Calu3 (cell line): ENCODE measurements at regions of chr15 and their contacts with region 1.

Region 1: GRCh38 chr15:80695104-80695910 is at the start of gene ABHD17C:
- DNase-seq: peak; percentile 84
- H3K4me3 Mint-ChIP-seq: peak within 1 kb of the TSS; percentile 91
- H3K27ac Mint-ChIP-seq: peak within 1 kb of the TSS; percentile 92
- H3K4me1 Mint-ChIP-seq: peaks cover 40% of the 10 kb centered on the region
- H3K27me3 Mint-ChIP-seq: no peaks in the 10 kb centered on the region
- CTCF ChIP-seq: no peak
- total RNA-seq, gene ABHD17C: 69.4 and 69.7 TPM in 2 replicates

Region 2: DNA sequence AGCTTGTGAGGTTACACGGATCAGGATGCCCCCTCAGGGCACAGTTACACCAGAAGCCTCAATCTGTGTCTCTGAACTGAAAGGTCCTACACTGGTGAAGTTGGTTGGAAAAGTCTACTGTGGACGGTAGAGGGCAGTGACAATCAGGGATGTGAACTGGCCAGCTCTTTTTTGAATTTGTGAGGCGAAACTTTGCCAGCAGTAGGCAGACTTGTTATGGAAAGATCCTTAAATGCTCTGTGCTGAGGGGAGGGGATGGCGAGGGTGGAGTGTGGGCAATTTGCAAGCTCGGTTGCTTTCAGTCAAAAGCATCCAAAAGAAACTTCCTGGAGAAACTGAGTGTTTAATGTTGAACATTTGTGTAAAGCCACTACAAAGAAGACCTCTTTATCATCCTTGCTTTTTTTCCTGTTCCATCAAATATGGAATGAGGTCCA is 127.6 kb before region 1 on chr15:
- CTCF ChIA-PET with region 1: interaction called, 17 read pairs
- intact Hi-C with region 1: loop called (anchors 5 kb)
- DNase-seq: peak; percentile 76
- H3K4me3 Mint-ChIP-seq: no peak overlapping the region
- H3K27ac Mint-ChIP-seq: no peak overlapping the region
- H3K4me1 Mint-ChIP-seq: peaks cover 7% of the 10 kb centered on the region
- H3K27me3 Mint-ChIP-seq: peaks cover 16% of the 10 kb centered on the region
- CTCF ChIP-seq: peak; percentile 75

Region 3: GRCh38 chr15:80636675-80637074 is 58.6 kb before region 1 on chr15:
- CTCF ChIA-PET with region 1: no interaction called
- intact Hi-C with region 1: no loop called
- DNase-seq: no peak
- H3K4me3 Mint-ChIP-seq: no peak overlapping the region
- H3K27ac Mint-ChIP-seq: no peak overlapping the region
- H3K4me1 Mint-ChIP-seq: no peaks in the 10 kb centered on the region
- H3K27me3 Mint-ChIP-seq: peaks cover 24% of the 10 kb centered on the region
- CTCF ChIP-seq: no peak

Region 4: GRCh38 chr15:80660122-80660521 is 35.2 kb before region 1 on chr15:
- CTCF ChIA-PET with region 1: interaction called, 18 read pairs
- intact Hi-C with region 1: loop called (anchors 1 kb)
- DNase-seq: peak; percentile 66
- H3K4me3 Mint-ChIP-seq: no peak overlapping the region
- H3K27ac Mint-ChIP-seq: no peak overlapping the region
- H3K4me1 Mint-ChIP-seq: peaks cover 48% of the 10 kb centered on the region
- H3K27me3 Mint-ChIP-seq: no peaks in the 10 kb centered on the region
- CTCF ChIP-seq: peak; percentile 35

Region 5: DNA sequence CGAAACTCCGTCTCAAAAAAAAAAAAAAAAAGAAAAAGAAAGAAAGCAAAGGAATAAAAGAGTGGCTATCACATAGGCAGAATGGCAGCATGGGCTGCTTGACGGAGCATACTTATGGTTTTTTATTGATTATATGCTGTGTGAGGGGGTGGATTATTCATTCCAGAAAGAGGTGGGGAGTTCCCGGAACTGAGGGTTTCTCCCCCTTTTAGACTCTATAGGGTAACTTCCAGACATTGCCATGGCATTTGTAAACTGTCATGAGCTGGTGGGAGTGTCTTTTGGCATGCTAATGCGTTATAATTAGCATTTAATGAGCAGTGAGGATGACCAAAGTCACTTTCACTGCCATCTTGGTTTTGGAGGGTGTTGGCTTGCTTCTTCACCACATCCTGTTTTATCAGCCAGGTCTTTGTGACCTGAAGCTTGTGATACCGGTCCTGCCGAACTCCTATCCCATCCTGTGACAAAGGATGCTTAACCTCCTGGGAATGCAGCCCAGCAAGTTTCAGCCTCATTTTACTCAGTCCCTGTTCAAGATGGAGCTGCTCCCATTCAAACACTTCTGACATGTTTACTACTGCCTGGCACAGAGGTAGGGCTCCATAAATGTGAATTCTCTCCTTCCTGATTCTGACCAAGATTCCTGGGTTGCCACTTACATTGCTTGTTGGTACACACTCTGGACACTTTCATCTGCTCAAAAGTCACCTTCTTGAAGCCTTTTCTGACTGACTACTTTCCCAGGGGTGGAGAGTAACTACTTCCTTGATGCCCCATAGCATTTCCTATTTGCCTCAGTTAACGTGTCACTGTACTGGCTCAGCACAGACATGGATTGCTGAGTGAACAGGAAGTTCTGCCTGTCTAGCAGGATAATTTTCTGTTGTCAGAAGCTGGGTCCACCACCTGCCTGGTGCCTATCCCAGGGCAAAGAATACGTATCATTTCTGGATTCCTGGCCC is 15.9 kb before region 1 on chr15:
- CTCF ChIA-PET with region 1: interaction called, 19 read pairs
- intact Hi-C with region 1: no loop called
- DNase-seq: peak; percentile 84
- H3K4me3 Mint-ChIP-seq: peak overlapping the region; percentile 27
- H3K27ac Mint-ChIP-seq: peak overlapping the region; percentile 95
- H3K4me1 Mint-ChIP-seq: peaks cover 66% of the 10 kb centered on the region
- H3K27me3 Mint-ChIP-seq: no peaks in the 10 kb centered on the region
- CTCF ChIP-seq: no peak

Region 6: DNA sequence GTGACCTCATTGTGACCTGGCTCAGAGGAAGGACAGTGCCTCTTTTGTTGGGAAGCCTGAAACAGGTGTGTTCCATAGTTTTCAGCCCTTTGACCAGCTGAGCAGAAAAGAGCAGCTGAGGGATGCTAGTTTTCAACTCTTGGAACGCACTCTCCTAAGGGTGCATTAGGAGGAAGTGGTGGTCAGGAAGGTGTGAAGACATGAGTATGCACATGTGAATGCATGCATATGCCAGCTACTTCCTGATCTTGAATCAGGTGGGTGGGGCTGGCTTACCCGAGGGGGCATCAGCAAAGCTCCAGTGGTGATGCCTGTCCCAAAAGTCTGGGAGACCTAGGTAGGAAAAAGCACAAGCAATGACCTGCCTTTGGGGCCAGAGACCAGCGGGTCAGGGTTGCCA is 60.6 kb after region 1 on chr15:
- CTCF ChIA-PET with region 1: no interaction called
- intact Hi-C with region 1: no loop called
- DNase-seq: no peak
- H3K4me3 Mint-ChIP-seq: no peak overlapping the region
- H3K27ac Mint-ChIP-seq: no peak overlapping the region
- H3K4me1 Mint-ChIP-seq: no peaks in the 10 kb centered on the region
- H3K27me3 Mint-ChIP-seq: no peaks in the 10 kb centered on the region
- CTCF ChIP-seq: no peak

Region 7: DNA sequence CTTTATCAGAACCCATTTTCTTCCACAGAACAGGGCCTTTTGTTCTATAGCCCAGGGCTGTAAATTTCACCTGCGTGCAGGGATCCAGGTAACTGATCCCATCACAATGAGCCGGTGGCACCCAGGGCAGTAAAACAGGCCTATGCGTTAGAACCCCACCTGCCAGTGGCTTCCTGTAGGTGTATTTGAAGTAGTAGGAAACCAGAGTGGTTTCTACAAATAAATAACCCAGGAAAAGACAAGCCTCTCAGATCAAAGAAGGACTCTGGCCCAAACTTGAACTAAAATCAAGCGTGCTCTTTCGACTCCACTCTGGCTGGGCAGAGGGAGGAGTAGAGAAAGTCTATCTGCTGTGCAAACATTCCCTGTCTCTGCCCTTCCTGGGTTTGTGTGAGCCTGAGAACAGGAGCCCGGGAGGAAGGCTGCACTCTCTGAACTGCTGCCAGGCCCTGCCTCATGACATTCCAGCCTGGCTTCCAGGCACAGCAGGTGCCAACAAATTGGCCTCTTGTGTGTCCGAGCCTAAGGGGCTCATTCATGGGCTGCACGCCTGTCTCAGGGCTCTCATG is 161.6 kb after region 1 on chr15:
- CTCF ChIA-PET with region 1: no interaction called
- intact Hi-C with region 1: loop called (anchors 10 kb)
- DNase-seq: peak; percentile 65
- H3K4me3 Mint-ChIP-seq: no peak overlapping the region
- H3K27ac Mint-ChIP-seq: peak overlapping the region; percentile 0
- H3K4me1 Mint-ChIP-seq: peaks cover 40% of the 10 kb centered on the region
- H3K27me3 Mint-ChIP-seq: peaks cover 18% of the 10 kb centered on the region
- CTCF ChIP-seq: no peak

Region 8: DNA sequence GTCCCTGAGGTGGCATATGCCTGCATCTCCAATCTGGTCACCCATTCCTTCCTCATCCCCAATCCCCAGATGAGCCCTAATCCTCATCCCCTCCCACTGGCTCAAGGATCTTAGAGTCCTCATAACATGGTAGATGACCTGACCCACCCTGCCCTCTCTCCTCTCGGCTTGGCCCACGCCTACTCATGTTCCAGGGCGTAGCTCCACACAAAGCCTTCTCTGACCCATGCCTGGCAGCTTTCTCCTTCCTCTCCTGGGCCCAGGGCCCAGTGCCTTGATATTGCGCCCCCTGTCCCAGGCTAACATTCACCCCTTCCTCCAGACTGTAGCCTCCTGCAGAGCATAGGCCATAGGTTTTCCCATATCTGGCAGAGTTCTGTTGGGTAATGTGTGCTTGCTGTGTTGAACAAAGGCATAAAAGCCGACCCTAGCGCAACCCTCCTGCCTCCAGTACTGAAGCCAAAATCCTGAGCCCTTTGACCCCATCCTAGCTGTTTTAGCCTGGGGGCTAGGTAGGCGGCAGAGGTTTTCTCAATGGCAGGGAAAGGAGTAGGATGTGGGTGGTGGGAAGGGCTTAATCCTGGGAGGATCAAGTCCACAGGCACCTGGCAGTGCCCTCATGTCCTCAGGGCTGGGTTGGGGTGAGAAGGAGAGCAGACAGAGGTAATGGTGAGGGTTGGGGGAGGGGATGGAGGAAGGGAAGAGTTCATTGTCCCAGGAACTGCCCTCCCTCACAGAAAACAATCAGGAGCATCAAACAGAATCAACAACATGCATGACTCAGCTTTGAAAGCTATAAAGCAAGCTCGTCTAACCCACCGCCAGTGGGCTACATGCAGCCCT is 258.9 kb after region 1 on chr15:
- CTCF ChIA-PET with region 1: no interaction called
- intact Hi-C with region 1: no loop called
- DNase-seq: no peak
- H3K4me3 Mint-ChIP-seq: no peak overlapping the region
- H3K27ac Mint-ChIP-seq: no peak overlapping the region
- H3K4me1 Mint-ChIP-seq: peaks cover 33% of the 10 kb centered on the region
- H3K27me3 Mint-ChIP-seq: no peaks in the 10 kb centered on the region
- CTCF ChIP-seq: no peak